ENCODE measurements at regions of chr15 and their contacts with region 1.

Region 1: DNA sequence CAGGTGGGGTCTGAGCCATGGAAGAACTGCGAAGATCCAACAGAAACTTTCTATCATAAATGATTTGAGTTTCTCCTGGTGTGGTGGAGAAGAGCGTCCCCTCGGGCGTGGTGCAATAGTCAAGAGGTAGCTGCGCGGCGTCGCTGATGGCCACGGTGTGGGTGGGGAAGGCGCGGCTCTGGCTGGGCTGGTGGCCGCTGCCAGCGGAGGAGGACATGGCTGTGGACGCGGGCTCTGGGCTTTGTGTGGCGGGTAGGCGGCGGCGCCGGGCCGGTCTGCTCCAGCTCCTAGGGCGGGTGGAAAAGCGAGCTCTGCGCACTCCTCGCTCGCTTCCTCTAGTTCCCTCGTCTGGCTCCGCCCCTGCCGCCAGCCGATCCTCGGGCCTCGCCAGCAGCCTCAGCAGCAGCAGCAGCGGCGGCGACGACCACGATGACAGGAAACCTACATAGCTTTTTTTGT is 5.9 kb downstream of the STARD9 start:
- DNase-seq: peak; percentile 75 to 87 (median 86)
- ATAC-seq: peak; percentile 94
- H3K4me3 ChIP-seq: peak overlapping the region in 1 of 2 donors; percentile 9
- H3K27ac ChIP-seq: peak overlapping the region in 2 of 4 donors; percentile 38 to 50
- H3K4me1 ChIP-seq: peaks cover 7% of the 10 kb centered on the region
- H3K27me3 ChIP-seq: no peaks in the 10 kb centered on the region
- CTCF ChIP-seq: peak in 1 of 7 experiments; percentile 5
- POLR2A ChIP-seq: peak in 2 of 3 donors; percentile 48 to 50

Region 2: DNA sequence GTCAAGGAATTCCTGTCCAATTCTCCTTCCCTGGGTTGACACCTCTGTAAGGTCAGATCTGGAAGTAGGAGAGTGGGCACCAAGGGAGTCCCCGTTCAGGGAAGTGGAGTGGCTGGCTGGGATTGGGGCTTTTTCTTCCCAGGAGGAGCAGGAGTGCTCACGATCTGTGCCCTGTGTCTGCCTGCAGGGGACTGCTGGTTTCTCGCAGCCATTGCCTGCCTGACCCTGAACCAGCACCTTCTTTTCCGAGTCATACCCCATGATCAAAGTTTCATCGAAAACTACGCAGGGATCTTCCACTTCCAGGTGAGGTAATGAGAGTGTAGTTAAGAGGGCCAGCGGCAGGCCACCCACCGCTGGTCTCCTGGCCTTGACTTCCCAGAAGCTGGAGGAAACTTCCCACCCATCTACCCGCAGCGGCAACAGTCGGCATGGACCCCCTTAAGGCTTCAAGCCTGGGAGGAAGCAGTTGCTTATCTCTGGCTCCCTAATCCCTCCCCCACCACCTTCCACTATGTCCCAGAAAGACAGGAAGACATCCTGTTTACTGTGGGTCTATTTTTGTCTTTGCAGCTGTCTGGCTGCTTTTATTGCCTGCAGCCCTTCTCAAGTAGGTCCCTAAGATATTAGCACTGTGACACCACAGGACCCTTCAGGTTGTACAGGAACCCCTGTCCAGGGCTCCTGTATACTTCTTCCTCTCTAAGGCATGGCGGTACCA is 195.2 kb before region 1 on chr15:
- intact Hi-C with region 1: no loop called
- DNase-seq: no peak
- ATAC-seq: no peak
- H3K4me3 ChIP-seq: no peak overlapping the region
- H3K27ac ChIP-seq: no peak overlapping the region
- H3K4me1 ChIP-seq: no peaks in the 10 kb centered on the region
- H3K27me3 ChIP-seq: no peaks in the 10 kb centered on the region
- CTCF ChIP-seq: no peak
- POLR2A ChIP-seq: no peak

Region 3: GRCh38 chr15:42919769-42920518 is 338.6 kb after region 1 on chr15:
- intact Hi-C with region 1: loop called (anchors 10 kb)
- DNase-seq: peak; percentile 43 to 56 (median 49)
- ATAC-seq: peak; percentile 24
- H3K4me3 ChIP-seq: peak overlapping the region; percentile 56 to 98
- H3K27ac ChIP-seq: peak overlapping the region; percentile 68 to 87 (median 82)
- H3K4me1 ChIP-seq: peaks cover 7% of the 10 kb centered on the region
- H3K27me3 ChIP-seq: no peaks in the 10 kb centered on the region
- CTCF ChIP-seq: no peak
- POLR2A ChIP-seq: no peak

Measured in body of pancreas (tissue), 4 donors.